ENCODE measurements at regions of chr7 and their contacts with region 1.

Region 1: DNA sequence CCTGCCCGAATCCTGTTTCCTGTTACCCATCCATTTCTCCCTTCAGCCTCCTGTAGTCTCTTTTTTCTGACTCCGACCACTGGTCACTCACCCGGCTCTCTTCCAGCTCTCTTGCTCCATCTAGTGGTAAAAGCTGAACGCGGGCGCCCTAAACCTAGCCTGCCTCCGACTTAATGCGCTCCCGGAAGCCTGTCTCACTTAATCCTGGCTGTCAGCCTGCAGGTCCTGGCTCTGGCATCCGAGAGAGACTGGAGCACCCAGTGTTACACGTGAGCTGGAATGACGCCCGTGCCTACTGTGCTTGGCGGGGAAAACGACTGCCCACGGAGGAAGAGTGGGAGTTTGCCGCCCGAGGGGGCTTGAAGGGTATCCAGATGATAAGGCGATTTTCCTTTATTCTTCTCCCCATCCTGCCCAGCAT is 10.3 kb downstream of the SUMF2 start:
- DNase-seq: peak; percentile 96
- H3K4me3 ChIP-seq: no peak overlapping the region
- H3K27ac ChIP-seq: peak overlapping the region in 3 of 4 donors; percentile 20 to 67 (median 45)
- H3K4me1 ChIP-seq: peaks cover 13 to 18% (median 16%) of the 10 kb centered on the region in 4 donors
- H3K27me3 ChIP-seq: no peaks in the 10 kb centered on the region
- CTCF ChIP-seq: peak; percentile 89 to 98 (median 92)
- EP300 ChIP-seq: no peak
- POLR2A ChIP-seq: no peak

Region 2: DNA sequence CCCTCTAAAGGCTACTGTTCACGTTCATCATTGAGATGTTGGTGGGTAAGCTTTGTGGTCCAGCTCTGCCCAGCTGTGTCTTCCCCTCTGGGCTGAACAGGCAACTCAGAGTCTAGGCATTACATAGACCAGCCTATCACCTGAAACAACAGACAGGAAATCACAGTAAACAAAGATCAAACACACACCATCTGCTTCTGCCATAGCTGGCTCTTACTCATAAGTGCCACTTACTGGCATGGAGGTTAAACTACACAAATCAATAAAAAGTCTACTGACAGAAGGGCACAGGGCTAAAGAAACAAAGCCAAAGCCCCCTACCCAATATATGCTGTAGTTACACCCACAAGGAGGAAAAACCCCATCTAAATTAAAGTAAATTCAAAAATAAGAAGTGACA is 246.8 kb before region 1 on chr7:
- intact Hi-C with region 1: no loop called
- DNase-seq: no peak
- H3K4me3 ChIP-seq: no peak overlapping the region
- H3K27ac ChIP-seq: no peak overlapping the region
- H3K4me1 ChIP-seq: no peaks in the 10 kb centered on the region
- H3K27me3 ChIP-seq: no peaks in the 10 kb centered on the region
- CTCF ChIP-seq: no peak
- EP300 ChIP-seq: no peak
- POLR2A ChIP-seq: no peak

Region 3: DNA sequence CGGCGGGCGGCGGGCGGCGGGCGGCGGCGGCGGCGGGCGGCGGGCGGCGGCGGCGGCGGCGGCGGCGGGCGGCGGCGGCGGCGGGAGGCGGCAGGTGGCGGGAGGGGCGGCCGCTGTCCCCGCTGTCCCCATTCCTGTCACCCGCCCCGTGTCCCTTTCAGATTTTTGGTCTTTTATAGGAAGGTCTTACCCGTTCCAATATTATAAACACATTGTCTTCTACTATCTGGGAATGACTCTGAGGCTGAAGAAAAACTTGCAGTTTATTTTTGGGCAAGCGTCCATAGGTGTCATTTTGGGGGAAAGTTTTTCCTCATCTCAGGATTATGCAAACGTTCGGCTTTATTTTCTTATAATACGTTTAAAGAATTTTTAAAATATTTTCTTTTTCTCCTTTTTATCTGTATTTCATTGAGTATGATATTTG is 186.5 kb before region 1 on chr7:
- intact Hi-C with region 1: loop called (anchors 10 kb)
- DNase-seq: no peak
- H3K4me3 ChIP-seq: peak overlapping the region; percentile 52 to 79 (median 62)
- H3K27ac ChIP-seq: peak overlapping the region; percentile 65 to 72 (median 70)
- H3K4me1 ChIP-seq: peaks cover 3 to 12% (median 8%) of the 10 kb centered on the region in 4 donors
- H3K27me3 ChIP-seq: no peaks in the 10 kb centered on the region
- CTCF ChIP-seq: no peak
- EP300 ChIP-seq: no peak
- POLR2A ChIP-seq: no peak

Region 4: DNA sequence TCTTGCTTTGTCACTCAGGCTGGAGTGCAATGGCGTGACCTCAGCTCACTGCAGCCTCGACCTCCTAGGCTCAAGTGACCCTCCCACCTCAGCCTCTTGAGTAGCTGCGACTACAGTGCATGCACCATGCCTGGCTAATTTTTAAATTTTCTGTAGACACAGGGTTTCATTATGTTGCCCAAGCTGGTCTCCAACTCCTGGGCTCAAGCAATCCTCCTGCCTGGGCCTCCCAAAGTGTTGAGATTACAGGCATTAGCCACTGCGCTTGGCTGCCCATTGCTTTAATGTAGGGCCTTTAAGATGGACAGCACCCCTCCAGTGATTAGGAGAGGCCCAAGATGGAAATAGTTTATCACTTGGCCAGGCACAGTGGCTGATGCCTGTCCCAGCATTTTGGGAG is 70.6 kb before region 1 on chr7:
- intact Hi-C with region 1: loop called (anchors 2 kb)
- DNase-seq: no peak
- H3K4me3 ChIP-seq: no peak overlapping the region
- H3K27ac ChIP-seq: no peak overlapping the region
- H3K4me1 ChIP-seq: peaks cover 0 to 6% (median 3%) of the 10 kb centered on the region in 4 donors
- H3K27me3 ChIP-seq: no peaks in the 10 kb centered on the region
- CTCF ChIP-seq: no peak
- EP300 ChIP-seq: no peak
- POLR2A ChIP-seq: no peak

Region 5: GRCh38 chr7:56199639-56200038 is 125.3 kb after region 1 on chr7:
- intact Hi-C with region 1: no loop called
- DNase-seq: no peak
- H3K4me3 ChIP-seq: no peak overlapping the region
- H3K27ac ChIP-seq: no peak overlapping the region
- H3K4me1 ChIP-seq: no peaks in the 10 kb centered on the region
- H3K27me3 ChIP-seq: no peaks in the 10 kb centered on the region
- CTCF ChIP-seq: no peak
- EP300 ChIP-seq: no peak
- POLR2A ChIP-seq: no peak

Measured in esophagus muscularis mucosa (tissue), 4 donors.